ENCODE measurements at regions of chr1 and their contacts with region 1.

Region 1: GRCh38 chr1:89065079-89065868 is at the start of gene GBP1:
- DNase-seq: no peak
- H3K4me3 Mint-ChIP-seq: peak within 1 kb of the TSS; percentile 75
- H3K27ac Mint-ChIP-seq: peak within 1 kb of the TSS; percentile 89
- H3K4me1 Mint-ChIP-seq: peaks cover 53% of the 10 kb centered on the region
- H3K27me3 Mint-ChIP-seq: no peaks in the 10 kb centered on the region
- total RNA-seq, gene GBP1: 48.2 to 52.8 TPM

Region 2: GRCh38 chr1:88990426-88990825 is 74.8 kb before region 1 on chr1:
- CTCF ChIA-PET with region 1: no interaction called
- intact Hi-C with region 1: loop called (anchors 1 kb)
- DNase-seq: no peak
- H3K4me3 Mint-ChIP-seq: peak overlapping the region; percentile 10
- H3K27ac Mint-ChIP-seq: peak overlapping the region; percentile 10
- H3K4me1 Mint-ChIP-seq: peaks cover 45% of the 10 kb centered on the region
- H3K27me3 Mint-ChIP-seq: no peaks in the 10 kb centered on the region

Region 3: GRCh38 chr1:89022167-89022959 is 42.9 kb before region 1 on chr1 and contains the start of gene GBP3:
- CTCF ChIA-PET with region 1: interaction called, 3 read pairs
- intact Hi-C with region 1: loop called (anchors 1 kb)
- DNase-seq: no peak
- H3K4me3 Mint-ChIP-seq: peak within 1 kb of the TSS; percentile 73
- H3K27ac Mint-ChIP-seq: peak within 1 kb of the TSS; percentile 72
- H3K4me1 Mint-ChIP-seq: peaks cover 51% of the 10 kb centered on the region
- H3K27me3 Mint-ChIP-seq: no peaks in the 10 kb centered on the region
- total RNA-seq, gene GBP3: 1.4 to 1.8 TPM

Region 4: GRCh38 chr1:89104147-89104546 is 38.9 kb after region 1 on chr1:
- CTCF ChIA-PET with region 1: interaction called, 6 read pairs
- intact Hi-C with region 1: loop called (anchors 1 kb)
- DNase-seq: no peak
- H3K4me3 Mint-ChIP-seq: no peak overlapping the region
- H3K27ac Mint-ChIP-seq: peak overlapping the region; percentile 88
- H3K4me1 Mint-ChIP-seq: peaks cover 41% of the 10 kb centered on the region
- H3K27me3 Mint-ChIP-seq: no peaks in the 10 kb centered on the region

Region 5: DNA sequence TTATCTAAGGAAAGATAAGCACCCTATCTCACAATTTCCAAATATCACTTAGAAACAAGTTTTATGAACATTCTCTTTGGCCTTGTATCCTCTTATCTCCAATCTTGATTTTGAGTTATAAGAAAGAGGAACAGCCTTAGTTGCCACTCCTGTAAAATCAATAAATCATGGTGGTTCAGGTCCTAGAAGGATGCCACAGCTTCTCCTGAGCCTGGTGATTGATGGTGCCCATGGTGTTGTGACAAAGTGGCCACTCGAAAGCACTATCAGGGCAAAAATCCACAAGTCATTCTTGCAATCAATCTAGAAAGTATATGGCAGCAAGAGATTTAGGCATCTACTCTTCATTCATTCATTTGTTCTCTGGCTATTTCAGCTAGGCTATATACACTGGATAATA is 326.4 kb after region 1 on chr1:
- CTCF ChIA-PET with region 1: no interaction called
- intact Hi-C with region 1: no loop called
- DNase-seq: no peak
- H3K4me3 Mint-ChIP-seq: no peak overlapping the region
- H3K27ac Mint-ChIP-seq: no peak overlapping the region
- H3K4me1 Mint-ChIP-seq: no peaks in the 10 kb centered on the region
- H3K27me3 Mint-ChIP-seq: no peaks in the 10 kb centered on the region